Vagina (tissue), 2 donors: ENCODE measurements at regions of chr5 and their contacts with region 1.

Region 1: GRCh38 chr5:102218159-102218558 is 77.9 kb downstream of the SLCO4C1 start:
- DNase-seq: no peak
- H3K4me3 ChIP-seq: no peak overlapping the region
- H3K27ac ChIP-seq: no peak overlapping the region
- H3K4me1 ChIP-seq: no peaks in the 10 kb centered on the region
- H3K27me3 ChIP-seq: no peaks in the 10 kb centered on the region
- CTCF ChIP-seq: no peak
- POLR2A ChIP-seq: no peak

Region 2: DNA sequence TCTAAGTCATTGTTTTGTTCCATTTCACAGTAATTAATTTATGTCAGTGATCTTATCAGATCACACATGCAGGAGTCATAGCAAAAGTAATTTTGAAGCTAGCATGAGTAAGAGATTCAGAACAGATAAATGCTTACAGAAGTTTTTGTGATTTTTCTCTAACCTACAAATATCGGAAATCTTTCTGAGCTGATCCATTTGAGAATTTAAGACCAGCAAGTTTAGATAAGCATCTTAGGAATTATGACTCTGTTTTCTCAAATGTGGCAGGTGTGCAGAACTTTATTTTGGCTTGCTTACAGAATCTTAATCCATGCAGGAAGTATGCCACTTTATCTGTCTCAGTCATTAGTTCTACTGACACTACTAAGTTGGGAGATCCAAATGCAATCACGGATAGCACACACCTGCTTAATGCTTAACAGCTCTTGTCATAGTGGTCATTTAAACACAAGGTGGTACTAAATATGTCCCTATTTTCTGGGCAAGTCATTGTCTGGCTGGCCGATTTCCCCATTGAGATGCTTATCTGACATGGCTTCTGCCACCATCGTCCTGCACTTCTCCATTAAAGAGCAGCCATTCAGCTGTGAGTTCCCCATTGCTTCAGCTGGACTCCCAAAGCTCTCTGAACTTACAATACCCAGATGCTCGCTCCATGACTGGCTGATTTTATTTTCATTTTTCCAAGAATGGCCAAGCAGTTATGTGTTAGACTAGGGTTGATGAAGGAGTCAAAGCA is 1649.9 kb after region 1 on chr5:
- intact Hi-C with region 1: loop called (anchors 10 kb)
- DNase-seq: no peak
- H3K4me3 ChIP-seq: no peak overlapping the region
- H3K27ac ChIP-seq: no peak overlapping the region
- H3K4me1 ChIP-seq: no peaks in the 10 kb centered on the region
- H3K27me3 ChIP-seq: no peaks in the 10 kb centered on the region
- CTCF ChIP-seq: no peak
- POLR2A ChIP-seq: no peak